Transverse colon (tissue), 4 donors: ENCODE measurements at regions of chr15 and their contacts with region 1.

Region 1: GRCh38 chr15:64905119-64905831 is 6.4 kb upstream of the ANKDD1A start:
- DNase-seq: peak; percentile 79
- H3K4me3 ChIP-seq: peak overlapping the region in 3 of 4 donors; percentile 2 to 32 (median 32)
- H3K27ac ChIP-seq: peak overlapping the region in 3 of 4 donors; percentile 13 to 38 (median 30)
- H3K4me1 ChIP-seq: peaks cover 0 to 5% (median 0%) of the 10 kb centered on the region in 4 donors
- H3K27me3 ChIP-seq: no peaks in the 10 kb centered on the region
- CTCF ChIP-seq: peak; percentile 75 to 83 (median 77)
- EP300 ChIP-seq: no peak
- POLR2A ChIP-seq: no peak

Region 2: DNA sequence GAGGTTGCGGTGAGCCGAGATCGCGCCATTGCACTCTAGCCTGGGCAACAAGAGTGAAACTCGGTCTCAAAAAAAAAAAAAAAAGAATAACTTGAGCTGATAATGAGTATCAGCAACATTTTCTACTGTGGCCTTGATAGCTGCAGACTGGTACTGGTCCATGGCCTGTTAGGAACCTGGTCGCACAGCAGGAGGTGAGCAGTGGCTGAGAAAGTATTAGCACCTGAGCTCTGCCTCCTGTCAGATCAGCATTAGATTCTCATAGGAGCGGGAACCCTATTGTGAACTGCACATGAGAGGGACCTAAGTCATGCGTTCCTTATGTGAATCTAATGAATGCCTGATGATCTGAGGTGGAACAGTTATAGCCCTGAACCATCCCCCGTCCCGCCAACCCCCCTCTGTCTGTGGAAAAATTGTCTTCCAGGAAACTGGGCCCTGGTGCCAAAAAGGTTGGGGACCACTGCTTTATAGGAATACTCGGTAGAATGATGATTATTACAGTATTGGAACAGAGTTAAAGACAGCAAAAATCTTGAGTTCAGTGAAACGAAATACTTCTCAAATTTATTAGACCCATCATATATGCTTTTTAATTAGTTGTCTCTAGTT is 318.9 kb before region 1 on chr15:
- in situ Hi-C with region 1: no loop called
- intact Hi-C with region 1: no loop called
- DNase-seq: no peak
- H3K4me3 ChIP-seq: no peak overlapping the region
- H3K27ac ChIP-seq: no peak overlapping the region
- H3K4me1 ChIP-seq: peaks cover 0 to 38% (median 3%) of the 10 kb centered on the region in 4 donors
- H3K27me3 ChIP-seq: no peaks in the 10 kb centered on the region
- CTCF ChIP-seq: no peak
- EP300 ChIP-seq: no peak
- POLR2A ChIP-seq: no peak

Region 3: DNA sequence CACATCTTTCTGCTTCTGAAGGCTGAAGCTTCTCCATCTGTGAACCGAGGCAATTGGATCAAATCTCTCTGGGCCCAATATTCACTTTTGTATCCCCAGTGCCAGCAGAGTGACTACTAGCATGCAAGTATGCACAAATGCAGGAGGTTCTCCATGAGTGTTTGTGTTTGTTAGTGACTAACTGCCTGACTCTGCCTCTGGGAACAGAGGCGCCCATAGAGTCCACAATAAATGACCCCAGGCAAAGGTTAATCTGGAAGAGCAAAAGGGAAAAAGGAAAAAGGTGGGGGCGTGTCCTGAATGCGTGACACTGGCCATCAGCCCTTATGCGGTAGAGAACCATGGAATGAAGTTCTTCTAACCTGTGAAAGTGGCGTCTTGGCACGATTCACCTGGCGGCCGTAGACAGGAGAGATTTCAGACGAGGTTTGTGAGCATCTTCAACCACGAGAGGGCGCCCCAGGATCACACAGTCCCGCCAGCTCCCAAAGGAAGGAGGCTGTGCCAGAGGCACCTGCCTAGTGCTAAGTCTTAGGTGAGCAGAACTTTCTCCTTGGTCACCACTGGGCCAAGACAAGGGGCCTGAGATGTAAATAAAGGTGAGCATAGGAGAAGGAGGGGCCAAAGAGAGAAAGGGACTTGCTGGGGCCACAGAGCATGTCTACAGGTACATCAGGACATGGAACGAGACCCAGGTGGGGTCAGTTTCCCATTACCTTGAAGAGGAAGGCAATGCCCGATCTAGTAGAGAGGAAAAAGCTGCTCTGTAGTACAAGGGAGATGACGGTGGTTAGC is 174.1 kb before region 1 on chr15:
- in situ Hi-C with region 1: loop called (anchors 5 to 25 kb)
- intact Hi-C with region 1: loop called (anchors 5 kb)
- DNase-seq: peak; percentile 91
- H3K4me3 ChIP-seq: no peak overlapping the region
- H3K27ac ChIP-seq: peak overlapping the region in 2 of 4 donors; percentile 11 to 34
- H3K4me1 ChIP-seq: peaks cover 0 to 7% (median 2%) of the 10 kb centered on the region in 4 donors
- H3K27me3 ChIP-seq: peaks cover 4% of the 10 kb centered on the region
- CTCF ChIP-seq: peak; percentile 86 to 96 (median 90)
- EP300 ChIP-seq: no peak
- POLR2A ChIP-seq: no peak

Region 4: GRCh38 chr15:64836023-64836536 is 69.2 kb before region 1 on chr15:
- in situ Hi-C with region 1: loop called in 1 of 4 experiments (anchors 10 kb)
- intact Hi-C with region 1: loop called (anchors 5 kb)
- DNase-seq: no peak
- H3K4me3 ChIP-seq: no peak overlapping the region
- H3K27ac ChIP-seq: peak overlapping the region; percentile 56 to 87 (median 71)
- H3K4me1 ChIP-seq: peaks cover 12 to 18% (median 14%) of the 10 kb centered on the region in 4 donors
- H3K27me3 ChIP-seq: peaks cover 3% of the 10 kb centered on the region
- CTCF ChIP-seq: no peak
- EP300 ChIP-seq: no peak
- POLR2A ChIP-seq: no peak

Region 5: GRCh38 chr15:64841258-64842095 is 63.8 kb before region 1 on chr15 and contains the start of gene PLEKHO2:
- in situ Hi-C with region 1: loop called in 1 of 4 experiments (anchors 10 kb)
- intact Hi-C with region 1: loop called (anchors 5 kb)
- DNase-seq: peak; percentile 95
- H3K4me3 ChIP-seq: peak within 1 kb of the TSS; percentile 69 to 100 (median 88)
- H3K27ac ChIP-seq: peak within 1 kb of the TSS; percentile 89 to 96 (median 94)
- H3K4me1 ChIP-seq: peaks cover 11 to 48% (median 26%) of the 10 kb centered on the region in 4 donors
- H3K27me3 ChIP-seq: peaks cover 3% of the 10 kb centered on the region
- CTCF ChIP-seq: peak in 1 of 5 experiments; percentile 6
- EP300 ChIP-seq: no peak
- POLR2A ChIP-seq: peak; percentile 72
- total RNA-seq, gene PLEKHO2: 4.6 to 12.3 (median 9.8) TPM

Region 6: GRCh38 chr15:64865998-64866520 is 39.2 kb before region 1 on chr15:
- in situ Hi-C with region 1: no loop called
- intact Hi-C with region 1: no loop called
- DNase-seq: peak; percentile 29
- H3K4me3 ChIP-seq: no peak overlapping the region
- H3K27ac ChIP-seq: peak overlapping the region; percentile 54 to 65 (median 56)
- H3K4me1 ChIP-seq: peaks cover 0 to 18% (median 13%) of the 10 kb centered on the region in 4 donors
- H3K27me3 ChIP-seq: no peaks in the 10 kb centered on the region
- CTCF ChIP-seq: no peak
- EP300 ChIP-seq: no peak
- POLR2A ChIP-seq: no peak

Region 7: GRCh38 chr15:64950888-64951287 is 45.6 kb after region 1 on chr15:
- in situ Hi-C with region 1: no loop called
- intact Hi-C with region 1: no loop called
- DNase-seq: no peak
- H3K4me3 ChIP-seq: no peak overlapping the region
- H3K27ac ChIP-seq: no peak overlapping the region
- H3K4me1 ChIP-seq: no peaks in the 10 kb centered on the region
- H3K27me3 ChIP-seq: no peaks in the 10 kb centered on the region
- CTCF ChIP-seq: no peak
- EP300 ChIP-seq: no peak
- POLR2A ChIP-seq: no peak